Panc1 (cell line): ENCODE measurements at regions of chr12 and their contacts with region 1.

Region 1: DNA sequence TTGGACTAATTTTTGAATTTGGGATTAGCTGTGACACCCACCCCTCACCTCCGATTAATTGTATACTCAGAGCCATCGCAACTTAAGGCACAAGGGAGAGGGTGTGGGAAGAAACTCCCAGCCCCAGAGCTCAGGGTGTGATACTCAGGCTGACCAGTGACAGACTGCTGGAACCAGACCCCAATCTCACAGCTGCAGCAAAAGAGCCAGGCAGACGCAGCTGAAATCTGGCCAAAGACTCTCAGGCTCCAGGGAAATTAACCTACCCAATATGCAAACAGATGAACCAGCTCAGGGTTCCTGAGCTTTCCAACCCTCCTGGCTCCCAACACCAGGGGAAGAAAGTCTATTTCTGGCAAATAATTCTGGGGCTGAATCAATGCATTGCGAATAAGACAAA is 30.5 kb downstream of the ANAPC7 start:
- DNase-seq: no peak
- ATAC-seq: no peak
- H3K4me3 ChIP-seq: no peak overlapping the region
- H3K27ac ChIP-seq: no peak overlapping the region
- H3K4me1 ChIP-seq: no peaks in the 10 kb centered on the region
- H3K27me3 ChIP-seq: no peaks in the 10 kb centered on the region
- CTCF ChIP-seq: no peak

Region 2: GRCh38 chr12:110403146-110403975 is 30.3 kb after region 1 on chr12 and contains the start of gene ANAPC7:
- CTCF ChIA-PET with region 1: no interaction called
- POLR2A ChIA-PET with region 1: interaction called, 11 read pairs
- in situ Hi-C with region 1: no loop called
- intact Hi-C with region 1: no loop called
- DNase-seq: peak; percentile 43
- ATAC-seq: peak; percentile 94
- H3K4me3 ChIP-seq: peak within 1 kb of the TSS; percentile 92 to 97
- H3K27ac ChIP-seq: peak within 1 kb of the TSS; percentile 100
- H3K4me1 ChIP-seq: peaks cover 9% of the 10 kb centered on the region
- H3K27me3 ChIP-seq: no peaks in the 10 kb centered on the region
- CTCF ChIP-seq: no peak
- total RNA-seq, gene ANAPC7: 85.8 TPM

Region 3: DNA sequence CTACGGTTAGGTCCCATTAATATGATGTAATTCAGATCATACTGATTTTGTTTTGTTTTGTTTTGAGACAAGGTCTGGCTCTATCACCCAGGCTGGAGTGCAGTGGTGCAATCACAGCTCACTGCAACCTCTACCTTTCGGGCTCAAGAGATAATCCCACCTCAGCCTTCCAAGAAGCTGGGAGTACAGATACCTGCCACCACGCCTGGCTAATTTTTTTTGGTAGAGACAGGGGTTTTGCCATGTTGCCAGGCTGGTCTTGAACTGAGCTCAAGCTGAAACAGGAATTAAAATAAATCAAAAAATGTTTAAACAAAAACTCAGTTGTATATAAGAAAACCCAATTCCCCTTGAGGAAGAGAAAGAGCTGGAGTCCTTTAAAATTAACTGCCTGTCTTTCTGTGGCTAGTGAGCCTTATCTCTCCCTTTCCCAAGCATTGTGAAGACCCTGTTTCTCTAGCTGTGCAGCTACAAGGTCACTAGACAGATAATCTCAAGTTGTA is 48.2 kb after region 1 on chr12:
- CTCF ChIA-PET with region 1: no interaction called
- POLR2A ChIA-PET with region 1: no interaction called
- in situ Hi-C with region 1: no loop called
- intact Hi-C with region 1: no loop called
- DNase-seq: no peak
- ATAC-seq: no peak
- H3K4me3 ChIP-seq: no peak overlapping the region
- H3K27ac ChIP-seq: no peak overlapping the region
- H3K4me1 ChIP-seq: no peaks in the 10 kb centered on the region; the same call in 1 of the 2 replicates
- H3K27me3 ChIP-seq: no peaks in the 10 kb centered on the region
- CTCF ChIP-seq: no peak